ENCODE measurements at regions of chr14 and their contacts with region 1.

Region 1: GRCh38 chr14:21455911-21456667 is at the start of gene CHD8:
- DNase-seq: peak; percentile 100
- H3K4me3 Mint-ChIP-seq: peak within 1 kb of the TSS; percentile 95
- H3K27ac Mint-ChIP-seq: peak within 1 kb of the TSS; percentile 97
- H3K4me1 Mint-ChIP-seq: peaks cover 26% of the 10 kb centered on the region
- H3K27me3 Mint-ChIP-seq: no peaks in the 10 kb centered on the region
- total RNA-seq, gene CHD8: 104 and 115 TPM in 2 replicates

Region 2: GRCh38 chr14:20559461-20559904 is 896.6 kb before region 1 on chr14:
- intact Hi-C with region 1: no loop called
- DNase-seq: peak; percentile 27
- H3K4me3 Mint-ChIP-seq: no peak overlapping the region
- H3K27ac Mint-ChIP-seq: no peak overlapping the region
- H3K4me1 Mint-ChIP-seq: no peaks in the 10 kb centered on the region
- H3K27me3 Mint-ChIP-seq: peaks cover 15% of the 10 kb centered on the region

Region 3: DNA sequence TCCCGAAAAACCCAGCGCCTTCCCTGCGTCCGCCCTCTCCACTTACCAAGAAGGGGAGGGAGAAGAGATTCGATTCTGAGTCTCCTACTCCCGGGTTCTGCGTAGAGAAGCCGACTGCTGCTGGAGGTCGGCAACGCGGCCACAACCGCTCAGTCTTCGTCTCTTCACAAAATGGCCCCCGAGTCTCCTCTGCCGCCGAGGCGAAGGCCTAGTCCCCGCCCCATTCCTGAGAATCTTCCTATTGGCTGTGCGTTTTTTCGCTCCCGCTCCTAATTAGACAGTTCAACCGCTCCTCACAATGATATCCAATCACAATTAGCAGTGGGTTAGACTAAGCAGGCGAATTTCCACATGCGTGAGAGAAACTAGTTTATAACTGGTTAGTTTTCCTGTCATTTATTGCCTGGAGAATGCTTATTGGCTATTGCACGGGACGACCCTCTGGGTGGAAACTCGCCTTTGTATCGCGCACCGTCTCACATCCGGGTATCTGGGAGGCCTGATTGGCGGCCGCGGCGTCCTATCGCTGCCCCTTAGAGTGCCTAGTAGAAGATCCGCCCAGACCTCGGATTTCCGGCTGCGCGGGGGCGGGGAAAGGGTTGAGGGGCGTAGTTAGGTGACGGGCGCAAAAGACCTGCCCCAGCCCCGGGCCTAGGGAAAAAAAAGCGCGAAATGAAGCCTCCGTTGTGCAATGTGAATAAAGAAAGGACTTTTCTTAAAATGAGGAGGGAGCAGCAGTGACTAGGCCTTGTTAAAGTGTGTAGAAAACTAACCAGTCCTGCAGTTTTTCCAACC is 186.6 kb before region 1 on chr14 and contains the start of gene HNRNPC:
- intact Hi-C with region 1: loop called (anchors 1 kb)
- DNase-seq: peak; percentile 100
- H3K4me3 Mint-ChIP-seq: peak within 1 kb of the TSS; percentile 92
- H3K27ac Mint-ChIP-seq: peak within 1 kb of the TSS; percentile 100
- H3K4me1 Mint-ChIP-seq: peaks cover 30% of the 10 kb centered on the region
- H3K27me3 Mint-ChIP-seq: no peaks in the 10 kb centered on the region
- total RNA-seq, gene HNRNPC: 1,009 and 1,054 TPM in 2 replicates

Region 4: DNA sequence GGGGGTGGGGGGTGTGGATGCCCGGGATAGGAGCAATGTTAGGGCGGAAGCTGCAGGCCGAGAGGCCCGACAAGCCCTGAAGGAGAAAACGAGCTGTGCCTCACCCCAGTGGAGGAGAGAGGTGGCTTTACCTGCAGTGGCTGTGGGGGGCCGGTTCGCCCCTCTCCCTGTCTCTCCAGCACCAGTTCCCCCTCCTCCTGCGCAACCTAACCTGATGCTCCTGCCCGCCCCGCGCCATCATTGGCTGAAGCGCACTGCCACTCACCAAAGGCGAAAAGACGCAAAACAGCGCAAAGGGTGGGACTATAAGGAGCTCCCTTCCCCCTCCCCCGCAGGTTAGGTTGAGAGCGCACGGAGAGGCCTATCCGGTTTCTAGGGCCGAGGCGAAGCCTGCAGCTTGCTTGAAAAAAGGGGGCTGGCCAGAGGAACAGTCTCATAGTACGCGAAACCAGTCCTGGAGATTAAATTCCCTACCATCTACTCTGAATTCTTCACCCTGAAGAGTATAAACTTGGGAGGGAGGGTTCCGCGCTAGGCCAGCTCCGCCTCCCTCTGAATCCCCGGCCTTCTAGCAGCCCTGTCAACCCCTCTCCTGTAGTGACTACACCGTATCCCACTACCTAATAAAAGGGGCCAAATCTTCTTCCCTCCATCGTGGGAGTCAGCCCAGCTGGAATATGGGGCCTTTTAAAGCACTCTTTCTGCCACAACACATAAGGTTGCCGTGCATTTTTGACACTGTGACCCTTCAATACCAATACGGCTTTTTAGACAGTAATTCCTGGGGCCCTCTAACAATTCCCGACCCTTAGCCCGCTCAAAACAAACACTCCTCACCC is 18.8 kb before region 1 on chr14:
- intact Hi-C with region 1: loop called (anchors 1 kb)
- DNase-seq: peak; percentile 100
- H3K4me3 Mint-ChIP-seq: peak overlapping the region; percentile 90
- H3K27ac Mint-ChIP-seq: peak overlapping the region; percentile 77
- H3K4me1 Mint-ChIP-seq: peaks cover 50% of the 10 kb centered on the region
- H3K27me3 Mint-ChIP-seq: no peaks in the 10 kb centered on the region

Region 5: DNA sequence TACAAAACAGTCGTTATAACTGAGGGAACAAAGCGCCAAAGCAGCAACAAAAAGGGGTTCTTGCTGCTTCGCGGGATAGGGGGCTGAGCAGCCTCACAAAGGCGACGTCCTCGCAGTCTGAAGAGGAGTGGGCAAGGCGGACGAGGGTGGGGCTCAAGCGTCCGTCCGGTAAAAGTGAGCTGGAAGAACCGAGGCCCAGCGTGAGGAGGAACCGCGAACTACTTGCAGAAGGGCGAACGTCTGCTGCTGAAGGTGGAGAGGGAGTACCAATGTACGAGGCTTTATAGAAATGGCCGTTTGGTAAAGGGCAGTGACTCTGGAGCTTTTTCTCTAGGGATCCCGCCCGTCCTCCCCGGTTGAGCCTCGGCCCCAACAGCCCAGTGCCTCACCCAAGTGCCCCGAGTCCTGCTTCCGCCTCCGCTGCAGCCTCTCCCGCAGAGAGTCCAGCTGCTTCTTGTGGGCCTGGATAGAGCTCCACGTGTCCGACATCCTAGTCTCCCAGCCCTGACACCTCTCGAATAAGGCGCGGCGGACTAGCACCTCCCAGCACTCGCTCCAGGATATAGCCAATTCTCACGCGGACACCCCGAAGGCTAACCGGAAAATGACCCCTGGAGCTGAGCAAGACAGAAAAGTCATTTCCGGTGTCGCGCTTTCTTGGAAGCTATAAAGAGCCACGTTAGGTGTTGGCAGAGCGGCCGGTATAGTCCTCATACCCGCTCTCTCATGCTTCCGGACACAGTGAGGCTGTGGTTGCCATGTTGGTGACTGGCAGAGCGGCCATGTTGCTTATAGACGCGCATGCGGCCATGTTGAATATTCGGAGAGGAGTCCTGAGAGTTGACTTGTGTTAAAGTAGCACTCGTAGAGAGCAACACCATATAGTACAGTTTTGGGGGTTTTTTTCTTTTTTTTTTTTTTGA is 54.9 kb after region 1 on chr14 and contains the start of gene METTL3:
- intact Hi-C with region 1: loop called (anchors 1 kb)
- DNase-seq: peak; percentile 98
- H3K4me3 Mint-ChIP-seq: peak within 1 kb of the TSS; percentile 99
- H3K27ac Mint-ChIP-seq: peak within 1 kb of the TSS; percentile 98
- H3K4me1 Mint-ChIP-seq: peaks cover 28% of the 10 kb centered on the region
- H3K27me3 Mint-ChIP-seq: peaks cover 4% of the 10 kb centered on the region
- total RNA-seq, gene METTL3: 72.9 and 81.7 TPM in 2 replicates

Region 6: GRCh38 chr14:21557084-21557901 is 101.2 kb after region 1 on chr14:
- intact Hi-C with region 1: loop called (anchors 1 kb)
- DNase-seq: peak; percentile 93
- H3K4me3 Mint-ChIP-seq: peak overlapping the region; percentile 41
- H3K27ac Mint-ChIP-seq: no peak overlapping the region
- H3K4me1 Mint-ChIP-seq: peaks cover 5% of the 10 kb centered on the region
- H3K27me3 Mint-ChIP-seq: no peaks in the 10 kb centered on the region